PC-9 (cell line): ENCODE measurements at regions of chr11 and their contacts with region 1.

Region 1: GRCh38 chr11:121464352-121464946 is 11.7 kb upstream of the SORL1-AS1 start:
- DNase-seq: peak; percentile 72 to 96
- H3K4me3 ChIP-seq: peak overlapping the region; percentile 9; the same call in 1 of the 2 replicates
- H3K27ac ChIP-seq: peak overlapping the region; percentile 95
- H3K4me1 ChIP-seq: peaks cover 93% of the 10 kb centered on the region
- H3K27me3 ChIP-seq: no peaks in the 10 kb centered on the region
- CTCF ChIP-seq: no peak

Region 2: DNA sequence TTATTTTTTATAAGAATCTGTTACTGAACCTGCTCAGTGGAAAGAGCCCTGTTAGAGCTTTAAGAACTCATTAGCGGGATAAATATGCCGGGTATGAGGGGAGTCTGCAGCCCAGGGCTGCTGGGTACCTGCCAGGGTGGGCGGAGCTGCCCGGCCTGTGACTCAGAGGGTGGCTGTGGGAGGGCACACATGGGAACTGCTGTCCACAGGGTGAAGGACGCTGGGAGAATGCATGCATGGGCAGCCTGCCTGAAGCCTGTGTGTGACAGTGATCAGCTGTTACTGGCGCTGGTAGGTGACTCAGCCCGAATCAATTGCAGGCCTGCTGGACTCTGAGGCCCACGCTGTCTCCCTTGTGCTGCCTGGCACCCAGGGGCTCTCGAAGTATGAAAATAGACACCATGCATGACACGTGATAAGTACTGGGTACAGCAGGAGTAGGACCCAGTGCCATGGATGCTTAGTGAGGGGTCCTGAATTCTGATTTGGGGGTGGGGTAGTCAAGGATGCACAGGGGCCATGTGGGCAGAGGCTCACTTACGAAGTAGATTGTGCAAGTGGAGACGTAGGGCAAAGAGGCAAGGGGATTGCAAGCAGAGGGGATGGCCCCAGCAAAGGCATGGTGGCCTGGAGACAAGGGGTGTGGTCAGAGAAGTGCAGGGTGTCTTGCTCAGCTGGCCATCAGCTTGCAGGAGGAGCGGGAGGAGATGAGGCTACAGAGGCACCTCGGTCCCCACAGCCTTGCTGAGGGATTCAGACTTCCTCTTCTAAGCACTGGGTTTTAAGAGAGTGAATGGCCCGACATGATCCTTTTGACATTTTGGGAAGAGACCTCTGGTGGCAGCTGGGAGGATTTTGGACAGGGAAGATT is 916.4 kb before region 1 on chr11:
- CTCF ChIA-PET with region 1: no interaction called
- POLR2A ChIA-PET with region 1: no interaction called
- intact Hi-C with region 1: loop called (anchors 10 kb)
- DNase-seq: peak; percentile 88 to 92
- H3K4me3 ChIP-seq: no peak overlapping the region
- H3K27ac ChIP-seq: no peak overlapping the region
- H3K4me1 ChIP-seq: peaks cover 24% of the 10 kb centered on the region
- H3K27me3 ChIP-seq: 0 out of 2 replicates have a peak, but pooled peaks cover 13% of the 10 kb centered on the region
- CTCF ChIP-seq: no peak; the same call in 1 of the 2 replicates

Region 3: GRCh38 chr11:120817158-120817557 is 647.3 kb before region 1 on chr11:
- CTCF ChIA-PET with region 1: no interaction called
- POLR2A ChIA-PET with region 1: no interaction called
- intact Hi-C with region 1: no loop called
- DNase-seq: no peak
- H3K4me3 ChIP-seq: no peak overlapping the region
- H3K27ac ChIP-seq: no peak overlapping the region
- H3K4me1 ChIP-seq: no peaks in the 10 kb centered on the region
- H3K27me3 ChIP-seq: peaks cover 46% of the 10 kb centered on the region
- CTCF ChIP-seq: no peak

Region 4: DNA sequence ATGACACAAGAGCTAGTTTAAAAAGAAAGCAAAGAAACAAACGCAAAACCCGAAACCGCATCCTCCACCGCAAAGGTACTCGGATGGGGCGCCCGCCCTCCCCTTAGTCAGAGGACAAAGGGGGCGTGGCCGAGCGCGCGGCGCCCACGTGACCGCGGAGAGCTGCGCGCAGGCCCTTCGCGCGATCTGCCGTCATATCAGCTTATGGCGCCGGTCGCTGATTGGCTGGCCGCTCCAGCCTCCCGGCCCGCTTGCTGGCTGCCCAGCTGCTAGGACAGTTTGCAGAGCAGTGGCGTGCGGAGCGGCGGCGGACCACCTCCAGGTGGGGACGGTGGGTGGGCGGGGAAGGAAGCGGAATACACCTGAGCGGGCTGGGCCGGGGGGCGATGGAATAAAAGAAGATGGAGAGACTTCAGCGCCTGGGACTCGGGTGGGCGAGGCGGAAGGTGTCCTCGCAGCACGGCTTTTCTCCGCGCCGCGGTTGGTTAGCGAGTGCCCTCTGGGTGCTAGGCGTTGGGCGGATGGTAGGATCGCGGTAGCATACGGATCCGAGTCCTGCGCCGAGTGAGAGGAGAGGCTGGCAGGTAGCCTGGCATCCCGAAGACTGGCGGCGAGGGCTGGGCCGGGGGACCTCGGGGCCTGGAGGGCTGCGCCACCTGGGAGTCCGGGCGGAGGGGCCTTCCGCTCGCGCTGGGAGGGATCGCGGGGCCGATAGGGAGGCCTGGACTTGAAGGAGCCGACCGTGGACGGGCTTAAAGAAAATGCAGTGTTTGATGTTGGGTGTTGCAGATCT is 171.8 kb before region 1 on chr11 and contains the start of gene SC5D:
- CTCF ChIA-PET with region 1: no interaction called
- POLR2A ChIA-PET with region 1: interaction called, 29 read pairs
- intact Hi-C with region 1: no loop called
- DNase-seq: peak; percentile 87 to 91
- H3K4me3 ChIP-seq: peak within 1 kb of the TSS; percentile 90
- H3K27ac ChIP-seq: peak within 1 kb of the TSS; percentile 34
- H3K4me1 ChIP-seq: peaks cover 11% of the 10 kb centered on the region
- H3K27me3 ChIP-seq: peaks cover 31% of the 10 kb centered on the region
- CTCF ChIP-seq: no peak
- total RNA-seq, gene SC5D: 10.2 and 16.9 TPM in 2 replicates

Region 5: DNA sequence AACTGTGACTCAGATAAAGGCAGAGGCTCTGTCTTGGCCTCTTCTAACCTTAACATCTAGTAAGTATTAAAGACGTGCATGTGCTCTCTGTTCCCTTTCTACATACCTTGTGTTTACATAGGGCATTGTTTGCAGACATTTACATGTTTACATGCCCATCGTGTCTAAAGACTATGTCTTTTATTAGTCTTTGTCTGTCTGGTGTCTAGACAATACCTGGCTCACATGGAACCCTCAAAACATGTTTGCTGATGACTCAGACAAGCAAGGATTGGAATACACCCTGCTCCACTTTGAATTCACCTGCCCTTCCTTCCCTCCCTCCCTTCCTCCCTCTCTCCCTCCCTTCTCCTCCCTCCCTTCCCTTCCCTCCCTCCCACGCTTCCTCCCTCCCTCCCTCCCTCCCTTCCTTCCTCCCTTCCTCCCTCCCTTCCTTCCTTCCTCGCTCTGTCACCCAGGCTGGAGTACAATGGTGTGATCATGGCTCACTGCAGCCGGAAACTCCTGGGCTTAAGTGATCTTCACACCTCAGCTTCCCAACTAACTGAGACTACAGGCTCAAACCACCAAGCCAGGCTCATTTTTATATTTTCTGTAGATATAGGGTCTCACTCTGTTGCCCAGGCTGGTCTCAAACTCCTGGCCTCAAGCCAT is 12.1 kb after region 1 on chr11:
- CTCF ChIA-PET with region 1: no interaction called
- POLR2A ChIA-PET with region 1: no interaction called
- intact Hi-C with region 1: loop called (anchors 1 kb)
- DNase-seq: peak in 1 of 2 experiments; percentile 58
- H3K4me3 ChIP-seq: no peak overlapping the region
- H3K27ac ChIP-seq: peak overlapping the region; percentile 16; the same call in 1 of the 2 replicates
- H3K4me1 ChIP-seq: peaks cover 47% of the 10 kb centered on the region
- H3K27me3 ChIP-seq: no peaks in the 10 kb centered on the region
- CTCF ChIP-seq: no peak

Region 6: GRCh38 chr11:121534131-121535093 is 70.0 kb after region 1 on chr11:
- CTCF ChIA-PET with region 1: no interaction called
- POLR2A ChIA-PET with region 1: no interaction called
- intact Hi-C with region 1: loop called (anchors 10 kb)
- DNase-seq: no peak
- H3K4me3 ChIP-seq: no peak overlapping the region
- H3K27ac ChIP-seq: no peak overlapping the region
- H3K4me1 ChIP-seq: no peaks in the 10 kb centered on the region
- H3K27me3 ChIP-seq: peaks cover 50% of the 10 kb centered on the region
- CTCF ChIP-seq: peak; percentile 57

Region 7: GRCh38 chr11:121681550-121682268 is 217.3 kb after region 1 on chr11:
- CTCF ChIA-PET with region 1: no interaction called
- POLR2A ChIA-PET with region 1: no interaction called
- intact Hi-C with region 1: no loop called
- DNase-seq: no peak
- H3K4me3 ChIP-seq: no peak overlapping the region
- H3K27ac ChIP-seq: no peak overlapping the region
- H3K4me1 ChIP-seq: no peaks in the 10 kb centered on the region
- H3K27me3 ChIP-seq: no peaks in the 10 kb centered on the region
- CTCF ChIP-seq: no peak